Spleen (tissue), 13 donors: ENCODE measurements at regions of chr7 and their contacts with region 1.

Region 1: DNA sequence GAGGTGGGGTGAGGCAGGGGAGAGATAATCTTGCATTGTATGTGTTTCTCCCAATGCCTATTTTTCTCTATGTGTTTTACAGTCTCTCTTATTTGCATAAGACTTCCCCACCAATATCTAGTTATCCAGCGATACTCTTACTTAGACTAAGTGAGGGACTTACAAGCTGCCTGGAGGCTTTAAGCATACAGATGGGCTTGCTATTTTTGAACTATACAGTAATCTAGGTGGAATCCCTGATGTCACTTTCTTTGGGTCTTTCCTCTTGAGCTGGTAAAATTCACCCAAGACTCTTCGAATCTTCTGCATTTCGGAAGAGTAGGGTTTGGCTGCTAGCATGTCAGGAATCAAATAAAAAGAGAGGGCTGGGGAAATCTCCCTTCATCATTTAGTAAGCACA is 76.6 kb downstream of the NDUFB2 start:
- DNase-seq: no peak
- H3K4me3 ChIP-seq: no peak overlapping the region
- H3K27ac ChIP-seq: no peak overlapping the region
- H3K4me1 ChIP-seq: no peaks in the 10 kb centered on the region
- H3K27me3 ChIP-seq: no peaks in the 10 kb centered on the region
- CTCF ChIP-seq: no peak
- POLR2A ChIP-seq: no peak

Region 2: DNA sequence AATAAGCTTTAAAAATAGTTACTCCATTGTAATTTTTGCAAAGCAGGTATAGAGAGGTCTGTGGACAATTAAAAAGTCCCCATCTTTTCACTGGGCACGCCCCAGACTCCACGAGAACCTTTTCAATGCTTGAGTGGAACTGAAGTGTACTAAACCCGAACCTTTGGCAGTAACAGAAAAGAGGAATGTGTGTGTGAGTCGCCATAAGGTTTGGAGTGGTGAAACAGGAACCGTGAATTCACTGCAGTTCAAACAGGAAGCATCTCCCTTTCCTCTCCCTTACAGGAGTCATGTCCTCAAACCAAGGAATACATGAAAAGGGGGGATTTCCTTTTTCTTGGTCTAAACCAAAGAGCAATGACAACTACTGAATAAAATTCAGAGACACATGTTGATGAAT is 53.4 kb before region 1 on chr7:
- intact Hi-C with region 1: loop called (anchors 5 kb)
- DNase-seq: no peak
- H3K4me3 ChIP-seq: no peak overlapping the region
- H3K27ac ChIP-seq: no peak overlapping the region
- H3K4me1 ChIP-seq: peaks cover 0 to 19% (median 4%) of the 10 kb centered on the region in 6 donors
- H3K27me3 ChIP-seq: no peaks in the 10 kb centered on the region
- CTCF ChIP-seq: no peak
- POLR2A ChIP-seq: no peak